CD8-positive, alpha-beta memory T cell (primary cell): ENCODE measurements at regions of chr2 and their contacts with region 1.

Region 1: DNA sequence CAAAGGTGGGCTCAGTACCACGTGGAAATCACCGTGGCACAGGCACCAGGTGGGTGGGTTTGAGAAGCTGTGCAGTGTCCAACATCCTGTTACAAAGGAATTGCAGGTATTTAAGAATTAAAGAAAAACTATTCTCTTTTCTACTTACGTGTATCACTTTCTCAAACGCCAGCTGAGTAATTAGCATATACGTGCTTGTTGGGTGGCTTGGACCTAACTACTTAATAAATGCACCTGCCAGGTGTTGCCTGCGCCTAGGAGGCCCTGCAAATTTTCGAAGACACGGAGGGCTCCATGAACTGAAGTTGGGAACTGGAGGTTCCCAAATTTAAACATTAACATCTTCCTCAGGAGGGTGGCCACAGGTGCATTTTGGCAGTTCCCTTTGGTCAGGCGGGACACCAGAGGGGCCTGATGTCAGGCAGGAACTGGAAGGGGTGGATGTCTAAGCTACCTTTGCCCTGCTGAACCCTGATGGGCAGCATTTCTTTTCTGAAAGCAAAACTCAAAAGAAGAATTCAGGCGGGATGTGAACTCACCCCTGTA is 84.8 kb downstream of the HS6ST1 start:
- DNase-seq: no peak
- H3K4me3 ChIP-seq: no peak overlapping the region
- H3K4me3 Mint-ChIP-seq: peak overlapping the region; percentile 77 to 93 (median 88)
- H3K27ac ChIP-seq: no peak overlapping the region
- H3K27ac Mint-ChIP-seq: peak overlapping the region in 4 of 8 donors; percentile 21 to 80 (median 70)
- H3K4me1 ChIP-seq: no peaks in the 10 kb centered on the region
- H3K4me1 Mint-ChIP-seq: peaks cover 4 to 8% (median 6%) of the 10 kb centered on the region in 3 donors
- H3K27me3 ChIP-seq: no peaks in the 10 kb centered on the region
- H3K27me3 Mint-ChIP-seq: peaks cover 2 to 10% of the 10 kb centered on the region in 2 donors

Region 2: GRCh38 chr2:128041561-128041960 is 192.3 kb before region 1 on chr2:
- CTCF ChIA-PET with region 1: no interaction called
- POLR2A ChIA-PET with region 1: no interaction called
- DNase-seq: no peak
- H3K4me3 ChIP-seq: no peak overlapping the region
- H3K4me3 Mint-ChIP-seq: no peak overlapping the region
- H3K27ac ChIP-seq: no peak overlapping the region
- H3K27ac Mint-ChIP-seq: no peak overlapping the region
- H3K4me1 ChIP-seq: no peaks in the 10 kb centered on the region
- H3K4me1 Mint-ChIP-seq: no peaks in the 10 kb centered on the region
- H3K27me3 ChIP-seq: no peaks in the 10 kb centered on the region
- H3K27me3 Mint-ChIP-seq: peaks cover 9 to 26% of the 10 kb centered on the region in 2 donors

Region 3: GRCh38 chr2:128108166-128108565 is 125.7 kb before region 1 on chr2:
- CTCF ChIA-PET with region 1: no interaction called
- POLR2A ChIA-PET with region 1: no interaction called
- DNase-seq: no peak
- H3K4me3 ChIP-seq: no peak overlapping the region
- H3K4me3 Mint-ChIP-seq: no peak overlapping the region
- H3K27ac ChIP-seq: no peak overlapping the region
- H3K27ac Mint-ChIP-seq: no peak overlapping the region
- H3K4me1 ChIP-seq: no peaks in the 10 kb centered on the region
- H3K4me1 Mint-ChIP-seq: peaks cover 9 to 13% (median 10%) of the 10 kb centered on the region in 3 donors
- H3K27me3 ChIP-seq: no peaks in the 10 kb centered on the region
- H3K27me3 Mint-ChIP-seq: no peaks in the 10 kb centered on the region

Region 4: DNA sequence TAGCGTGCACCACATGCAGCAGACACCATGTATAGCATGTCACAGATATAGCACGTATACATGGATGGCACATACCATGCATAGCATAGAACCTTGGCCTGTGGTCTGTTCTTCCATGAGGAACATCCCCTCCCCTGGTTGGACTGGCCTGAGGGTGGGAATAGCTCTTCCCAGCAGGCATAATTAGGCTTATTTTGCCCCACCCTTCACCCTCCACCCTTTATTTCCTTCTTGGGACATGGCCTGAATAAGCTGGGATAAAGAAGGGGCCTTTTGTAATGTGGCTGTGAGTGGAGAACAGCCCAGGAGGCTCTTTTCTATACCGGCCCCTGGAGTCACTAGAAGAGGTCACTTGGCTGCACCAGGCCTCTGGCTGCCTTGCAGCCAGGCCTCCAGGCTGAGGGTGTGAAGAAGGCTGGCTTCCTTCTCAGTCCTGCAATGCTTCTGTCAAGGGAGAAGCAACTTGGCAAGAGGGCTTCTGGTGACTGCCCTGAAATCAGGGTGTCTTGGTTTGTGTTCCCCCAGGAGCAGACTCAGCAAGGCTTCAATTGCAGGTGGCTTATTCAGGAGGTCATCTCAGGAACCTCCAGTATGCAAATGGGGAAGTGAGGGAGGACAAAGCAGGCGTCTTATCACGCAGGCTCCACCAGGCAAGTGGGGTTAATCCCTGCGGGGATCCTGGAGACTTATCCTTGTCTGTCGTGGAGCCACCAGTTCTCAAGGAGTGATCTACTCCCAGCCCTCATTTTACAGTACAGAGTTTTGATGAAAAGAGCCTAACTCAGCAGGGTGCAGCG is 16.6 kb after region 1 on chr2:
- CTCF ChIA-PET with region 1: no interaction called
- POLR2A ChIA-PET with region 1: interaction called, 12 read pairs
- DNase-seq: no peak
- H3K4me3 ChIP-seq: no peak overlapping the region
- H3K4me3 Mint-ChIP-seq: no peak overlapping the region
- H3K27ac ChIP-seq: no peak overlapping the region
- H3K27ac Mint-ChIP-seq: peak overlapping the region in 1 of 8 donors; percentile 26
- H3K4me1 ChIP-seq: no peaks in the 10 kb centered on the region
- H3K4me1 Mint-ChIP-seq: peaks cover 6 to 15% (median 8%) of the 10 kb centered on the region in 3 donors
- H3K27me3 ChIP-seq: no peaks in the 10 kb centered on the region
- H3K27me3 Mint-ChIP-seq: peaks cover 7 to 12% of the 10 kb centered on the region in 2 donors

Region 5: DNA sequence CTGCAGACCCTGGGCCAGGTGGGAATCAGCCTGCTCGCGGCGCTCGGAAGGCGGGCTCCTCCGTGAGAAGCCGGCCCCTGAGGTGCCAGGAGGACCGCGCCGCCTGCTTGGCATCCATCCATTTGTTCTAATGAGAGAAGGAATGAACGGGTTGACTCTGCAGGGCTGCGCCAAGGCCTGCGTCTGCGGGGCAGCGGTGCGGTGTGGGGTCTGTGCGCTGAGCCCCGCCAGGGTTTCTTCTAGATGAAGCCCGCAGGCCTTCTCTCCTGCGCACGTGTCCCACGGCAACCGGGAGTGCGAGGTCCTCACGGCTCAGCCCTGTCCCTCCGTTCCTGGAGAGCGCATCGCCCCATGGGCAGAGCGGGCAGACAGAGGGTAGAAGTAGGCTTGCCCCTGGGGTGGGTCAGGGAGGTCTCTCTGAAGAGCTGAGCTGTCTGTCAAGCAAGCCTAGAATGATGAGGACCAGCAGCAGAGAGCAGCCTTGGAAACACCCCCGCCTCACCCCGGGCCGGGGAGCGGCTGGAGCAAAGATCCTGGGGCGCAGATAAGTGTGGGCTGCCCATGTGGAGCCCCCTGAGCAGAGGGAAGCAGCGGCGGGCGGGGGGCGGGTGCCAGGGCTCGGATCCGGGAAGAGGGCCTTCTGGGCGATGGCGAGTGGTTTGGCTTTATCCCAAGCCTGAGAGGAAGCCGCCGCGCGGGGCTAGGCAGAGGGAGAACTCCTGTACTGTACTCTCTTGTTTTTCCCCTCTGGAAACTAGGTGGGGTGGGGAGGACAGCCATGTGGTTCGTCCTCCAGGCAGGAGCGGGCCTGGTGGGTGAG is 112.7 kb after region 1 on chr2:
- CTCF ChIA-PET with region 1: no interaction called
- POLR2A ChIA-PET with region 1: no interaction called
- DNase-seq: no peak
- H3K4me3 ChIP-seq: no peak overlapping the region
- H3K4me3 Mint-ChIP-seq: no peak overlapping the region
- H3K27ac ChIP-seq: no peak overlapping the region
- H3K27ac Mint-ChIP-seq: peak overlapping the region in 1 of 8 donors; percentile 54
- H3K4me1 ChIP-seq: no peaks in the 10 kb centered on the region
- H3K4me1 Mint-ChIP-seq: no peaks in the 10 kb centered on the region
- H3K27me3 ChIP-seq: no peaks in the 10 kb centered on the region
- H3K27me3 Mint-ChIP-seq: peaks cover 7 to 21% of the 10 kb centered on the region in 2 donors